Right lobe of liver (tissue), 6 donors: ENCODE measurements at regions of chr6 and their contacts with region 1.

Region 1: GRCh38 chr6:127266178-127266891 is at the start of gene RNF146:
- DNase-seq: peak; percentile 88 to 90 (median 89)
- ATAC-seq: peak; percentile 88 to 93 (median 91)
- H3K4me3 ChIP-seq: peak within 1 kb of the TSS; percentile 68 to 79 (median 78)
- H3K27ac ChIP-seq: peak within 1 kb of the TSS; percentile 98 to 99 (median 99)
- H3K4me1 ChIP-seq: peaks cover 0 to 16% (median 8%) of the 10 kb centered on the region in 4 donors
- H3K27me3 ChIP-seq: no peaks in the 10 kb centered on the region
- CTCF ChIP-seq: peak; percentile 65 to 83 (median 72)
- POLR2A ChIP-seq: no peak
- total RNA-seq, gene RNF146: 12.8 to 19.5 (median 14.9) TPM

Region 2: GRCh38 chr6:126245077-126245476 is 1021.3 kb before region 1 on chr6:
- intact Hi-C with region 1: no loop called
- DNase-seq: no peak
- ATAC-seq: no peak
- H3K4me3 ChIP-seq: no peak overlapping the region
- H3K27ac ChIP-seq: no peak overlapping the region
- H3K4me1 ChIP-seq: no peaks in the 10 kb centered on the region
- H3K27me3 ChIP-seq: no peaks in the 10 kb centered on the region
- CTCF ChIP-seq: no peak
- POLR2A ChIP-seq: no peak

Region 3: DNA sequence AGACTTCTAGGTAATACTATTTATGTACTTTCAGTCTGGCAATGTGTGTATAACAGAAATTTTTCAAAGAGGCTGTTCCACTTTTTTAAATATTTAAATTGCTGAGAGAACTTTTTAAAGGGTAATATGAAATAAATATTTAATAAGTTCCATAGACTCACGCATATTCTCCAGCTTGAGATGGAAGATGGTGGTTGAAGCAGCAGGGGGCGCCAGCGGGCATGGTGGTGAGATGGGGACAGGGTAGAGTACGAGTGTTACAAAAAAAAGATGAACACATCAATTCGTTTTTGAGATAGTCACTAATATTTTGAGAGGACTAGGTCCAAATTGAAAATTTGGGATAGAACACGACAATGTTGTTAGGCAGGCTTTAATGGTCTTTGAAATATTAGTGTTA is 79.4 kb before region 1 on chr6:
- intact Hi-C with region 1: loop called in 1 of 2 experiments (anchors 10 kb)
- DNase-seq: peak; percentile 82 to 85 (median 85)
- ATAC-seq: peak; percentile 86 to 93 (median 89)
- H3K4me3 ChIP-seq: no peak overlapping the region
- H3K27ac ChIP-seq: no peak overlapping the region
- H3K4me1 ChIP-seq: no peaks in the 10 kb centered on the region
- H3K27me3 ChIP-seq: no peaks in the 10 kb centered on the region
- CTCF ChIP-seq: peak; percentile 62 to 78 (median 70)
- POLR2A ChIP-seq: no peak

Region 4: DNA sequence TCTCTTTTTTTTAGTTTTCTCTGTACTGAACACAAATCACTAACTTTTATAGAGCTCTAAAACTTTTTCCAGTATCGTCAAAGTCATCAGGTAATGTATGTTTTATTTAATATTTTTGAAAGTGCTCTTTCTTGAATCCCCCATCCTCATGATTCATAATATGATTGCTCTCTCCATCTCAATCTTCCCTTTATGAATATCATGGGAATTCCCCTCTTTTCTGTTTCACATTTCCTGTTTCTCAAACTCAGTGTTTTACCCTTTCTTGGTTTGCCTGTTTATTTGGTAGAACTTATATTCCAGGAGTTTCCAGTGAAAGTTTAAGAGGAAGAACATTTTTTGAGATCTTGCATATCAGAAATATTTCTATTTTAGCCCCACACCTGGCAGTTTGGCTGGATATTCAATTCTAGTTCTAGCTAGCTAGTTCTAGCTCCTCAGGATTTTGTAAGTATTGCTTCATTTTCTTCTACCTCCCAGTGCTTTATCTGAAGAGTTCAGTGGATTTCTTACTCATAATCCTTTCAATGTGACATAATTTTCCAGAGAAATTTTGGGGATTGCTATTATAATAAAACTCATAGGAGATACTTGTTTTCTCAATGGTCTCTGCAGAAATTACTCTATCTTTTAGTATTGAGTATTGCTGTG is 304.5 kb after region 1 on chr6:
- intact Hi-C with region 1: no loop called
- DNase-seq: no peak
- ATAC-seq: no peak
- H3K4me3 ChIP-seq: no peak overlapping the region
- H3K27ac ChIP-seq: no peak overlapping the region
- H3K4me1 ChIP-seq: no peaks in the 10 kb centered on the region
- H3K27me3 ChIP-seq: peaks cover 0 to 3% of the 10 kb centered on the region in 2 donors
- CTCF ChIP-seq: no peak
- POLR2A ChIP-seq: no peak